ENCODE measurements at regions of chr13 and their contacts with region 1.

Region 1: GRCh38 chr13:79775830-79776229 is 294.9 kb downstream of the NDFIP2 start:
- DNase-seq: no peak
- H3K4me3 ChIP-seq: no peak overlapping the region
- H3K27ac ChIP-seq: no peak overlapping the region
- H3K4me1 ChIP-seq: peaks cover 6 to 15% (median 9%) of the 10 kb centered on the region in 3 donors
- H3K27me3 ChIP-seq: no peaks in the 10 kb centered on the region
- CTCF ChIP-seq: peak in 5 of 6 experiments; percentile 31 to 54 (median 37)
- POLR2A ChIP-seq: no peak

Region 2: GRCh38 chr13:80359778-80360465 is 584.1 kb after region 1 on chr13:
- intact Hi-C with region 1: loop called (anchors 10 kb)
- DNase-seq: no peak
- H3K4me3 ChIP-seq: no peak overlapping the region
- H3K27ac ChIP-seq: no peak overlapping the region
- H3K4me1 ChIP-seq: peaks cover 0 to 23% (median 0%) of the 10 kb centered on the region in 3 donors
- H3K27me3 ChIP-seq: no peaks in the 10 kb centered on the region
- CTCF ChIP-seq: no peak
- POLR2A ChIP-seq: no peak

Measured in esophagus squamous epithelium (tissue), 5 donors.